HepG2 (cell line): ENCODE measurements at regions of chr16 and their contacts with region 1.

Region 1: DNA sequence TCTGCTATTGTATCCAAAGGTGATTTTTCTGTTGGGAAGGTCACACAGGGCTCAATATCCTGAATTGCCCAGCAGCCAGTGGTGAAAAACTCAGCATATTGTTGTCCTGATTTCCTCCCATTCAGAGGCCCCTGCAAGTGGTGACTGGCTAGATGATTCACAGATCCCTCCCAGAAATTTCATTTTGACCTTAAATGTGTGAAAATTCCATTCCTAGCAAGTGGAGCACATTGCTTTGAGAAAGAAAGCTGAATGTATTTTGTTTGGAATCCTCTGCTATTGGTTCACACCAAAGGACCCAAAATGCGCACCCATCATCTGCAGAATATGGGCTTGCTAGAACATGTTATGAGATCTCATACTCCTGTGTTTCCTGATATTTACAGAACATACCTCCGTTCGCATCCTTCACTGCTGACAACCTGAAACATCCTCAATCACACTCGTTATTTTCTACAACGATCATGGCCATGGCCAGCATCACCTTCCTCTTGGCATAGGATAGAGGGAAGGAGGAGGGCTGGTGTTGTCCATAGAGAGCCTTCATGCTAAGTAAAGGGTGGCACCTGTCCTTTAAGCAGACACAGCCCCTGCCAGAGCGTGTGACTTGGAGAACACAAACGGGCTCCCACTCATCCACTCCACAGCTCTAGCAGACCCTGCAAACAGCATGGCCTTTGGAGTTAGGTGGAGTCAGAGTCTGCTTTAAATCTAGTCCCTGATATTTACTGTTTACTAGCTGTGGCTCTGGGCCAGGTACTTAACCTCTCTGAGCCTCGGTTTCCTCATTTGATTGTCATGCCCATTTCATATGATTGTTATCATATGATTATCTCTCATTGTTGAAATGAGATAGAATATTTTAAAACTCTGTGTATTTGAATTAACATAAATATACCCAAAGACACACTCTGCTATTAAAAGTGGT is 30.4 kb upstream of the NFAT5 start:
- DNase-seq: no peak
- ATAC-seq: peak; percentile 61
- H3K4me3 ChIP-seq: 0 out of 6 replicates have a peak overlapping the region, but pooled peaks of 1 of the 3 experiments have one; percentile 6
- H3K27ac ChIP-seq: no peak overlapping the region
- H3K4me1 ChIP-seq: peaks cover 48% of the 10 kb centered on the region
- H3K27me3 ChIP-seq: peaks cover 0 to 6% of the 10 kb centered on the region in 2 experiments; a peak in 2 of 5 replicates
- CTCF ChIP-seq: no peak
- EP300 ChIP-seq: no peak
- POLR2A ChIP-seq: no peak
- RAD21 ChIP-seq: no peak

Region 2: GRCh38 chr16:69363281-69363717 is 172.1 kb before region 1 on chr16:
- CTCF ChIA-PET with region 1: no interaction called
- POLR2A ChIA-PET with region 1: no interaction called
- in situ Hi-C with region 1: no loop called
- intact Hi-C with region 1: no loop called
- DNase-seq: peak; percentile 34
- ATAC-seq: peak; percentile 36
- H3K4me3 ChIP-seq: no peak overlapping the region
- H3K27ac ChIP-seq: no peak overlapping the region
- H3K4me1 ChIP-seq: peaks cover 16% of the 10 kb centered on the region
- H3K27me3 ChIP-seq: no peaks in the 10 kb centered on the region
- CTCF ChIP-seq: no peak
- EP300 ChIP-seq: no peak
- POLR2A ChIP-seq: no peak
- RAD21 ChIP-seq: no peak

Region 3: DNA sequence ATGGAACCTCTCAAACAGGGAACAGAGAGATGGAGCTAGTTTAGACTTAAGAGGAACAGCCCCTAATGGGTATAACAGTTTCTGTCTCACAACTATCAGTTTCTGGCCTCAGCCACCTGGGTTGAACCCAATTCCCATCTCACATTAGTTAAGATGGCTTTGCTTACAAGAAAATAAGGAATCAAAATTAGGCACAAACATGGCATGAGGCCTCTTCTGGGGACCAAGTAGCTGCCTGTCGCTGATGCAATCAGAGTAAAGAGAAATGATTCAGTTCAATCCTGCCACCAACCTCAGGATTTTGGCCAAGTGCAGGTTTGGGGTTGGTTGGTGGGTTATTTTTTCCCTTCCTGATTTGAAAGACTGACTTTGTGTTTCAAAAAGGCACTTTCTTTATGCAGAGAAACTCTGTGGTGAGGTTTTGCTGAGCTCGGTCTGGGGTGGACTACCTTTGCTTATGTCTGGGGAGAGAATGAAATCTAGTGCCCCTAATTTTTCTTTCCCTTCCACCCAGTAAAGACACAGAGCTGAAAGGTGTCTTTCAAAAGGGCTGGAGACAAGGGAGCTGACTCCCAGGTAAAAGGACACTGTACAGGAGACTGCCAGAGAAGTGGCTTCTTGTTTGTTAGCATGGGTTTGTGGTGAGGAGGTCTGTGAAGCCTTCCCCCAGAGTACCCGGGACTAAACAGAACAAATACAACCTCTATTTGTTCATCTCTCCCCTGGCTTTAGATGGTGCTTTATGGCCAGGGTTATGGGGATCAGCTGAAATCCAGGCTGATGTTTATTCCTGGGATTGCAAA is 14.4 kb before region 1 on chr16:
- CTCF ChIA-PET with region 1: no interaction called
- POLR2A ChIA-PET with region 1: interaction called, 23 read pairs
- in situ Hi-C with region 1: no loop called
- intact Hi-C with region 1: no loop called
- DNase-seq: peak; percentile 92
- ATAC-seq: peak; percentile 94
- H3K4me3 ChIP-seq: peak overlapping the region; percentile 14 to 47 (median 20); a peak in 4 of 6 replicates
- H3K27ac ChIP-seq: peak overlapping the region; percentile 63
- H3K4me1 ChIP-seq: peaks cover 48% of the 10 kb centered on the region
- H3K27me3 ChIP-seq: no peaks in the 10 kb centered on the region
- CTCF ChIP-seq: peak; percentile 26; the same call in 1 of the 2 replicates
- EP300 ChIP-seq: peak in 1 of 2 experiments; percentile 50; a peak in 1 of 4 replicates
- POLR2A ChIP-seq: no peak
- RAD21 ChIP-seq: no peak

Region 4: DNA sequence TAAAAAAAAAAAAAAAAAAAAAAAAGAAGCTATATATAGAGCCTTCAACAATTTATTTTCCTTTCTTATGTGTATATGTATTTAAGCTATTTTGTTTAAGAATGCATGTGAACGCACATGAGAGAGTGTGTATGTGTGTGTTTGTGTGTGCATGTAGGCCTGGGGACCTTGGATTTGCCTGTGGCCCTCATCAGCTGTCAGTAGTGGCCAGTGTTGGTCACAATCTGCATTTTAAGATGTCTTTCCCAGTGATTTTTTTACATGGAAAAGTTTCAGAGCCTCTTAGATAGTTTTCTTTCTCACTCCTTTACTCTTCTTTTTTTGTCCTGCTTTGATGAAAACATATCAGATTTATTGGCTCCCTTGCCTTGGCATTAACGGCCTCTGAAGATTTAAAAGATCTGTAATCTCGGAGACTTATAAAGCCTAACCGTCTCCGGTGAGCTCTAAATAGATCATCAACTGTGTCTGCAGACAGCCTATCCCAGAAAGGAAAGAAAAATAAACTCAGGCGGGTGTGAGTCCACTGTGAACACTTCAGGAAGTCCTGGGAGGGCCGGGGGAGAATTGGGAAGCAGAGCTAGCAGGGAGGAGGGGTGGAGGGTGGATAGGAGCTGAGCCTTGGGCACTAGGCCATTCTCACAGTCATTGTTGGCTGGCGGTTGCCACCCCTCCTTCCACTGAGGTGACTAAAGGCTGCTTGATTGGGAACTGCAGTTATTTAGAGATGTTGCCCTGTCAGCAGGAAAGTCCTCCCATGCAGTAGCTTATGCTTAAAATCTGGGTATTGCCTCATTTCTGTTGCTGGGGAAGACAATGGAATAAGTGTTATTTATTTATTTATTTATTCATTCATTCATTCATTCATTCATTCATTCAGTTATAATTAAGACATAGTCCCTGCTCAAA is 313.5 kb after region 1 on chr16:
- CTCF ChIA-PET with region 1: no interaction called
- POLR2A ChIA-PET with region 1: no interaction called
- in situ Hi-C with region 1: no loop called
- intact Hi-C with region 1: no loop called
- DNase-seq: no peak
- ATAC-seq: no peak
- H3K4me3 ChIP-seq: no peak overlapping the region
- H3K27ac ChIP-seq: no peak overlapping the region
- H3K4me1 ChIP-seq: peaks cover 50% of the 10 kb centered on the region
- H3K27me3 ChIP-seq: no peaks in the 10 kb centered on the region
- CTCF ChIP-seq: no peak
- EP300 ChIP-seq: no peak
- POLR2A ChIP-seq: no peak
- RAD21 ChIP-seq: no peak